ENCODE measurements at regions of chr19 and their contacts with region 1.

Region 1: GRCh38 chr19:14479975-14480699 is 5.0 kb upstream of the PTGER1 start:
- DNase-seq: peak; percentile 79
- ATAC-seq: peak; percentile 83
- H3K4me3 Mint-ChIP-seq: no peak overlapping the region
- H3K27ac Mint-ChIP-seq: no peak overlapping the region
- H3K4me1 Mint-ChIP-seq: peaks cover 18% of the 10 kb centered on the region
- H3K27me3 Mint-ChIP-seq: no peaks in the 10 kb centered on the region

Region 2: DNA sequence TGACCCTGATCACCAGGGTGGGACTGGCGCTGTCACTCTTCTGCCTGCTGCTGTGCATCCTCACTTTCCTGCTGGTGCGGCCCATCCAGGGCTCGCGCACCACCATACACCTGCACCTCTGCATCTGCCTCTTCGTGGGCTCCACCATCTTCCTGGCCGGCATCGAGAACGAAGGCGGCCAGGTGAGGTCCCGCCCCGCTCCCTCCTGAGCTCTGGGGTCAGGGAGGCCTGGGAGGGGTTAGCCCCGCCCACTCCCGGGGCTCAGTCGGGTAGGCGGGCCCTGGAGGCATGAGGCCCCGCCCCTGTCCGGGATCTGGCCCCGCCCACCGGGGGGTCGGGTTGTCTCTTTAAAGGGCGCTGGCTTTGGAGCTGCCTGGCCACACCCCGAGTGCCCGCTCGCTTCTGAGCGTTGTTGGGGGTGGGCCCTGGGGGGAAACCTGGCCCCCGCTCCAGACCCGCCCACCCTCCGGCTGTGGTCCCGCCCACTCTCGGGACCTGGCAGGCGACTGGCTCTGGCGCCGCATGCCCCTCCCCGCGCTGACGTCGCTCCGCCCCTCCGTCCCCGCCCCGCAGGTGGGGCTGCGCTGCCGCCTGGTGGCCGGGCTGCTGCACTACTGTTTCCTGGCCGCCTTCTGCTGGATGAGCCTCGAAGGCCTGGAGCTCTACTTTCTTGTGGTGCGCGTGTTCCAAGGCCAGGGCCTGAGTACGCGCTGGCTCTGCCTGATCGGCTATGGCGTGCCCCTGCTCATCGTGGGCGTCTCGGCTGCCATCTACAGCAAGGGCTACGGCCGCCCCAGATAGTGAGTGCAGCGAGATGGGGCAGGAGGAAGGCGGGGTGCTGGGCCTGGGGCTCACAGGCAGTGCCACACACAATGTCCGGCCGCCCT is 74.1 kb before region 1 on chr19:
- CTCF ChIA-PET with region 1: interaction called, 14 read pairs
- DNase-seq: peak; percentile 94
- ATAC-seq: peak; percentile 80
- H3K4me3 Mint-ChIP-seq: no peak overlapping the region
- H3K27ac Mint-ChIP-seq: peak overlapping the region; percentile 52
- H3K4me1 Mint-ChIP-seq: peaks cover 38% of the 10 kb centered on the region
- H3K27me3 Mint-ChIP-seq: no peaks in the 10 kb centered on the region

Region 3: GRCh38 chr19:14419106-14419813 is 60.9 kb before region 1 on chr19 and contains the start of gene DDX39A:
- CTCF ChIA-PET with region 1: interaction called, 28 read pairs
- DNase-seq: peak; percentile 99
- ATAC-seq: peak; percentile 93
- H3K4me3 Mint-ChIP-seq: peak within 1 kb of the TSS; percentile 86
- H3K27ac Mint-ChIP-seq: peak within 1 kb of the TSS; percentile 94
- H3K4me1 Mint-ChIP-seq: peaks cover 33% of the 10 kb centered on the region
- H3K27me3 Mint-ChIP-seq: no peaks in the 10 kb centered on the region
- total RNA-seq, gene DDX39A: 273 to 311 TPM

Region 4: DNA sequence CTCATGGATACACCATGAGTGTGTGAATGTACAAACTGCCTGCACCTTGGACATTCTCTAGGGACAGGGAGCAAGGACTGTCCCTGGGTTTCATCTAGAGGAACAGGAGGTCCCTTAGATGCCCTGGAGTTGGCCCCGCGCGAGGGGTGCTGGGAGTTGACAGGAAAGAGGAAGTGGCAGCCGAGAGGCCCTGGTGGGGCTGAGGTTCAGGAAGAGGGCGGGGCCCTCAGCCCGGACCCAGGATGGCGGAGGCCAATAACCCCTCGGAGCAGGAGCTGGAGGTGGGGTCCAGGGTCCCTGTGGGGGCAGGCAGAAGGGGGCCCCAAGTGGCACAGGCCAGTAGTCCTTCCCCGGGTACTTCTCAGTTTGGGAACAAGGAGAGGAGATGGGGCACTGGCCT is 40.1 kb before region 1 on chr19:
- CTCF ChIA-PET with region 1: interaction called, 11 read pairs
- DNase-seq: peak; percentile 91
- ATAC-seq: peak; percentile 99
- H3K4me3 Mint-ChIP-seq: peak overlapping the region; percentile 85
- H3K27ac Mint-ChIP-seq: peak overlapping the region; percentile 91
- H3K4me1 Mint-ChIP-seq: peaks cover 44% of the 10 kb centered on the region
- H3K27me3 Mint-ChIP-seq: no peaks in the 10 kb centered on the region

Region 5: GRCh38 chr19:14505488-14506432 is 25.6 kb after region 1 on chr19:
- CTCF ChIA-PET with region 1: interaction called, 29 read pairs
- DNase-seq: peak; percentile 82
- ATAC-seq: peak; percentile 72
- H3K4me3 Mint-ChIP-seq: no peak overlapping the region
- H3K27ac Mint-ChIP-seq: peak overlapping the region; percentile 65
- H3K4me1 Mint-ChIP-seq: peaks cover 33% of the 10 kb centered on the region
- H3K27me3 Mint-ChIP-seq: no peaks in the 10 kb centered on the region

Region 6: DNA sequence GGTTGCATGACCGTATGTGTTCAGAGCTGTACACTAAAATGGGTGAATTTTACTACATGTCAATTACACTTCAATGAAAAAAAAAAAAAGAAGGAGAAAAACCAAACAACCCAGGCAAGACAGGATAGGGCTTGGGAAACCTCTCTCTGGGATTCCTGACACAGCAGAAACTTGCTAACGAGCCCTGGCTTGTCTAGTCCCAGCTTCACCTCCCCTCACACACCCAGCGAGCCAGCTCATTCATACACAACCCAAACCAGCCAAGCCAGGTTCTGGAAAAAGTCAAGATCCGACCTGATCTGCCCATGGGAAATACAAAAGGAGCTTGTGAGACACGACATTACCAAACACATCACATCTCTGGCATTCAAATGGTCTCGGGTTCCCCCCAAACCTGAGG is 45.6 kb after region 1 on chr19:
- CTCF ChIA-PET with region 1: no interaction called
- DNase-seq: no peak
- ATAC-seq: no peak
- H3K4me3 Mint-ChIP-seq: no peak overlapping the region
- H3K27ac Mint-ChIP-seq: no peak overlapping the region
- H3K4me1 Mint-ChIP-seq: peaks cover 40% of the 10 kb centered on the region
- H3K27me3 Mint-ChIP-seq: no peaks in the 10 kb centered on the region